SK-N-SH (cell line): ENCODE measurements at regions of chr5 and their contacts with region 1.

Region 1: GRCh38 chr5:141960449-141961202 is 2.6 kb upstream of the PCDH12 start:
- DNase-seq: peak; percentile 87
- H3K4me3 ChIP-seq: peak overlapping the region in 1 of 2 experiments; percentile 43; a peak in 1 of 4 replicates
- H3K27ac ChIP-seq: no peak overlapping the region
- H3K4me1 ChIP-seq: peaks cover 0 to 17% of the 10 kb centered on the region in 2 experiments; a peak in 2 of 4 replicates
- H3K27me3 ChIP-seq: no peaks in the 10 kb centered on the region
- CTCF ChIP-seq: peak; percentile 89
- EP300 ChIP-seq: no peak
- RAD21 ChIP-seq: peak; percentile 90

Region 2: GRCh38 chr5:141650851-141651727 is 309.5 kb before region 1 on chr5 and contains the start of gene FCHSD1:
- CTCF ChIA-PET with region 1: interaction called, 13 read pairs
- POLR2A ChIA-PET with region 1: no interaction called
- DNase-seq: peak; percentile 99
- H3K4me3 ChIP-seq: peak within 1 kb of the TSS; percentile 74 to 83
- H3K27ac ChIP-seq: peak within 1 kb of the TSS in 1 of 2 experiments; percentile 45; a peak in 1 of 4 replicates
- H3K4me1 ChIP-seq: peaks cover 0 to 15% of the 10 kb centered on the region in 2 experiments; a peak in 1 of 4 replicates
- H3K27me3 ChIP-seq: no peaks in the 10 kb centered on the region
- CTCF ChIP-seq: no peak
- EP300 ChIP-seq: no peak
- RAD21 ChIP-seq: no peak
- polyA plus RNA-seq, gene FCHSD1: 49.2 and 58.3 TPM in 2 replicates

Region 3: DNA sequence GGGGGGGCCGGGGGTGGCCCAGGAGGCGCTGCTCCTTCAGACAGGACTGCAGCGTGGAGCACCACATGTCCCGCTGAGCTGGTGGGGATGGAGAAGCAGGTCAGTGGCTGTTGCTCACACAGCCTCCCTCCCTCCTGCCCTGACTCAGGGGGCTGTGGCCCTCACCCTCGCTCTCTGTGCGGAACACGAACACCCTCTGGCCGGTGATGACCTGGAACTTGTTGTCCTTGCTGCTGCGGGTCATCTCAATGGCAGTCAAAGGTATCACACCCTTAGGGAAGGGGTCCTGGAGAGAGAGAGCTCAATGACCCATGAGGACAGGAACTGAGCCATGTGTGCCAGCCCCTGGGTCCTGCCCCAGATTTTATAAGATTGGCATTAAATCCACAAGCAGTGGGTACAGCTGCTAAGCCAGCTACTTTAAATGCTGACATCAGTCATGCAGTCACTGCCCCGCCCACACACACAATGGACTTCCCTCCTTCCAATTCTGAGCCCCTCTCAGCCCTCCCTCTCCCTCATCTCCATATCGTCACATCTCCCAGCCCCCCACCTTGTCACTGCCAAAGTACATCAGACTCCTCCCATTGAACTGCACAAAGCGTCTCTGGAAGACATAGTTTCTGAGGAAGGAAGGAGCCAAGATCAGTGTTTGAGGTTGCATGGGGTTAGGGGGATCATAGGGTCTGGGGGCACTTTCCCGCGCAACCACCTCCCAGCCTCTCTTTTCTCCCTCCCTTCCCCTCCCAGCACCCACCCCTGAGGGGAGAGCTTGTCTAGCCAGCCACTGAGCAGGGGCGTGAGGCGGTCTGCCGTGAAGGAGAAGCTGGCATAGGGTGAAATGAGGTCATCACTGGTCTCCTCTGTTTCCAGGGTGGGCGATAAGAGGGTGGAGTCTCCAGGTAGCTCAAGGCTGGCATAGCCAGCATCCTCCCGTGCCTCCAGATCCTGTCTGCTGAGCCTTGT is 287.5 kb before region 1 on chr5:
- CTCF ChIA-PET with region 1: interaction called, 39 read pairs
- POLR2A ChIA-PET with region 1: interaction called, 3 read pairs
- DNase-seq: no peak
- H3K4me3 ChIP-seq: no peak overlapping the region
- H3K27ac ChIP-seq: no peak overlapping the region
- H3K4me1 ChIP-seq: no peaks in the 10 kb centered on the region
- H3K27me3 ChIP-seq: no peaks in the 10 kb centered on the region
- CTCF ChIP-seq: no peak
- EP300 ChIP-seq: no peak
- RAD21 ChIP-seq: no peak

Region 4: DNA sequence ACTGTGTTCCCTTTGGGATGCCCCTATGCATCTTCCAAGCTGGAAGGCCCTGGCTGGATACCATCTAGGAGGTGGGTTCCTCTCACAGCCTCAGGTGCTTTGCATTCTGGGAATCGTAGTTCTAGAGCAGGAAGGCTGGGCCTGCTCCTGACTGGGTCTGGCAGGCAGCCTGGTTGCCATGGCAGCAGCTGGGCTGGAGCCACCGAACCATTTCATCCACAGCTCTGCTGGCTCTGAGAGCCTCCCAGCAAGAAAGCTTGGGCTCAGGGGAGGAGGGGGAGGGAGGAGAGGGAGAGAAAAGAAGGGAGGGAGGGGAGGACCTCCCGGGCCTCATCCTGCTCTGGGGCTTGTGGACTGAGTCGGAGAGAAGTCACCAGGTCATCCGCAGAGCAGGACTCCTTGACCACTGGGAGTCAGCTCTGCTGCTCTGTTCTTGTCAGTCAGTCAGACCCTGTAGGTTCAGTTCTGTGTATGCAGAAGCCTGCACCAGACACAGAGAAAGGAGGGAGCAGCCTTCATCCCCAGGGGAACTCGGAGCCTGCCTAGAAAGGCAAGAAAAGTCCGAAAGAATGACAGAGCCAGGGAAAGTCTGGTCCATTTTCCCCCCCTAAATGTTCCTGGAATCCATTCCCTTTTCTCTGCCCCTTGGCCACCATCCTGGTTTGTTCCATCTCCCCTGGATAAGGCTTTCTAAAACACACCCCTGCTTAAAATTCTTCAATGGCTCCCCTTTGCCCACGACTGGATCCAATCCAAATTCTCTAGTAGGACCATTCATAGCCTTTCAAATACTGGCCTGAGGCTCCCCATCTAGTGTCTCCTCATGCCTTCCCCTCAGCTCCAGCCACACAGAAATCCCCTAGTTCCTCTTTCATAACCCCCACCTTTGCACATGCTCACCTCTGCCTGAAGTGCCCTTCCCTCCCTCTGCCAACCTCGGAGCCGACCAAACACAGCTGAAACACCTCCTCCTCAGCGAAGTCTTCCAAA is 213.2 kb before region 1 on chr5:
- CTCF ChIA-PET with region 1: interaction called, 11 read pairs
- POLR2A ChIA-PET with region 1: no interaction called
- DNase-seq: peak; percentile 91
- H3K4me3 ChIP-seq: no peak overlapping the region
- H3K27ac ChIP-seq: peak overlapping the region in 1 of 2 experiments; percentile 89; a peak in 2 of 4 replicates
- H3K4me1 ChIP-seq: peaks cover 0 to 38% of the 10 kb centered on the region in 2 experiments; a peak in 2 of 4 replicates
- H3K27me3 ChIP-seq: no peaks in the 10 kb centered on the region; the same call in 1 of the 2 replicates
- CTCF ChIP-seq: no peak
- EP300 ChIP-seq: no peak; a peak in 1 of 4 replicates
- RAD21 ChIP-seq: peak; percentile 14; the same call in 1 of the 2 replicates

Region 5: GRCh38 chr5:141835928-141836670 is 124.5 kb before region 1 on chr5:
- CTCF ChIA-PET with region 1: interaction called, 14 read pairs
- POLR2A ChIA-PET with region 1: no interaction called
- DNase-seq: no peak
- H3K4me3 ChIP-seq: no peak overlapping the region
- H3K27ac ChIP-seq: no peak overlapping the region
- H3K4me1 ChIP-seq: peaks cover 0 to 59% of the 10 kb centered on the region in 2 experiments; a peak in 2 of 4 replicates
- H3K27me3 ChIP-seq: peaks cover 17% of the 10 kb centered on the region; the same call in 1 of the 2 replicates
- CTCF ChIP-seq: no peak
- EP300 ChIP-seq: no peak
- RAD21 ChIP-seq: no peak

Region 6: DNA sequence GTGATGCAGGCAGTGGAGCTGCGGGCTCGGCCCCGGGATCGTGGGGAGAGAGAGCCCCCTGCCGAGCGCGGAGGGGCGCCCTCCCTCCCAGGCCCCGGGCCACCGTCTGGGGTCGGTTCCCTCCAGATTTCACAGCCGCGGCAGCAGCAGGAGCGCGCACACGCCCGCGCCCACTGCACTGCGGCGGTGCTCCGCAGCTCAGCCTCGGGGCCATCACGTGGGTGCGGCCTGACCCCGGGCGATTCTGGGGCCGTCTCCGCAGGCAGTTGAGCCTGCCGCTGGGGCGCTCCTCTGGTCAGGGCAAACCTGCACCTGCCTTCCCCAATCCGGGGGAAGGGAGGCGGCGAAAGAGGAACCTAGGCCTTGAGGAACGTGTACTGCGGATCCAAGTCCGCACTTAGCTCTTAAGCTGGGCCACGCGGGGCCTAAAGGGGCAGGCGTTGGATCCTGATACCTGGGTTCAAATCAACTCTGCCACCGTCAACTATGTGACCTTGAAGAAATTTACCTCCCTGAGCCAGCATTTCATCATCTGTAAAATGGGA is 46.4 kb before region 1 on chr5:
- CTCF ChIA-PET with region 1: interaction called, 71 read pairs
- POLR2A ChIA-PET with region 1: interaction called, 4 read pairs
- DNase-seq: peak; percentile 94
- H3K4me3 ChIP-seq: peak overlapping the region in 1 of 2 experiments; percentile 4; a peak in 1 of 4 replicates
- H3K27ac ChIP-seq: no peak overlapping the region
- H3K4me1 ChIP-seq: peaks cover 0 to 4% of the 10 kb centered on the region in 2 experiments; a peak in 1 of 4 replicates
- H3K27me3 ChIP-seq: no peaks in the 10 kb centered on the region; the same call in 1 of the 2 replicates
- CTCF ChIP-seq: no peak
- EP300 ChIP-seq: no peak
- RAD21 ChIP-seq: peak; percentile 75

Region 7: GRCh38 chr5:141976176-141976575 is 15.6 kb after region 1 on chr5:
- CTCF ChIA-PET with region 1: interaction called, 99 read pairs
- POLR2A ChIA-PET with region 1: no interaction called
- DNase-seq: no peak
- H3K4me3 ChIP-seq: no peak overlapping the region
- H3K27ac ChIP-seq: no peak overlapping the region
- H3K4me1 ChIP-seq: peaks cover 8 to 9% of the 10 kb centered on the region in 2 experiments; a peak in 3 of 4 replicates
- H3K27me3 ChIP-seq: no peaks in the 10 kb centered on the region
- CTCF ChIP-seq: no peak
- EP300 ChIP-seq: no peak
- RAD21 ChIP-seq: no peak

Region 8: DNA sequence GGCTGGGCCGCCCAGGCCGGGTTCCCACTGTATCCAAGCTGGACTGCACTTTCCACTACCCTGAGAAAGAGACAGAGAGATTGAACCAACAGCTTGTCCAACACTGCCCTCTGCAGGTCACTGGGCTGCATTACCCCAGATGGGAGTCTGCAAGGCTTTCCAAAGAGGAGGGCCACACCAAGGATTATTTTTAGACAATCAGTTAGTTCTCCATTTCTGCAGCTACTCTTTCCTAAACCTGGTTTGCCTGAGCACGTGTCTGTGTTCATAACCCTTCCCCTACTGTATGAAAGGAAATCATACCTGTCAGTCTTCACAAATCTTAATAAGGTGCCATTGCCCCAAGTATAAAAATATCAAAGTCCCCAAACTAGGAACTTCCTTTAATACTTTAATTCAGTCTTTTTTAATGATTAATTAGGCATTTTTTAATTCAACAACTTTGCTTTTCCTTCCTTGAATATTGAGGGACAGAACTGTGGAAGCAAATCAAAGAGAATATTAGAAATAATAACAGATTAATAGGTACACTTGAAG is 738.6 kb after region 1 on chr5:
- CTCF ChIA-PET with region 1: no interaction called
- POLR2A ChIA-PET with region 1: no interaction called
- DNase-seq: peak; percentile 74
- H3K4me3 ChIP-seq: no peak overlapping the region; a peak in 1 of 4 replicates
- H3K27ac ChIP-seq: no peak overlapping the region
- H3K4me1 ChIP-seq: peaks cover 23 to 28% of the 10 kb centered on the region in 2 experiments
- H3K27me3 ChIP-seq: no peaks in the 10 kb centered on the region
- CTCF ChIP-seq: peak; percentile 95
- EP300 ChIP-seq: no peak
- RAD21 ChIP-seq: peak; percentile 100

Region 9: GRCh38 chr5:142900927-142901326 is 940.3 kb after region 1 on chr5:
- CTCF ChIA-PET with region 1: no interaction called
- POLR2A ChIA-PET with region 1: no interaction called
- DNase-seq: no peak
- H3K4me3 ChIP-seq: no peak overlapping the region
- H3K27ac ChIP-seq: no peak overlapping the region
- H3K4me1 ChIP-seq: peaks cover 3 to 8% of the 10 kb centered on the region in 2 experiments; a peak in 2 of 4 replicates
- H3K27me3 ChIP-seq: no peaks in the 10 kb centered on the region
- CTCF ChIP-seq: no peak
- EP300 ChIP-seq: no peak
- RAD21 ChIP-seq: no peak

Region 10: DNA sequence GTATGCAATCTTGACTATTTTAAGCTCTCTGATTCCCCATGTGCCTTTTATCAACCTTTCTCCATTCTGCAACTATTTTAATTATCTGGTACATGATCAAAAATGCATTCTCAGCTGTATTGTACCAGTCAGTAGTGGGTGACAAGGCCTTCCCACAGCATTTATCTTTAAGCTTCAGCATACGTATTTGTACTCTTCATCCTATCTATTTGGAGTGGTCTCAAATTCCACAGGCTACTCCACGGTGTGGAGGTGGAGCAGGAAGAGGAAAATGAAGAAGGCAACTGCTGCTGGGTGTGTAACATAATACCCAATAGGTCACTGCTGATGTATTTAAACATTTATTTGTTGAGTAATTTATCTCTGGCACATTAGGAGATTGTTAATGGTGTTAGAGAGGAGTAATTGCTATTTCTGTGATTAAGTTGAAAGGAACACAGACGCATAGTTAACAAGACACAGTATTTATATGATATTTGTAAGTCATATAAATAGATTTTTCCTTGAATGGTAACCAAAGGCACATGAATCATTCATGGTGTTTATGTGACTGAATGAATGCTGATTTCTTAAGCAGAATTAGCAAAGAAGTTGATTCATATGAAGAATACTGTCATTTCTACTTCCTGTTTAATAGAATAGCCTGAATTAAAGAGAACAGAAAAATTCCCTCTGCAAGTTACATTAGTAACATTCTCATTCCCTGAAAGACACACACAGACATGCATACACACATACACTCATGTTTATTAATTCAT is 1596.6 kb after region 1 on chr5:
- CTCF ChIA-PET with region 1: no interaction called
- POLR2A ChIA-PET with region 1: no interaction called
- DNase-seq: no peak
- H3K4me3 ChIP-seq: no peak overlapping the region
- H3K27ac ChIP-seq: peak overlapping the region; percentile 39 to 43; a peak in 3 of 4 replicates
- H3K4me1 ChIP-seq: peaks cover 2 to 26% of the 10 kb centered on the region in 2 experiments; a peak in 3 of 4 replicates
- H3K27me3 ChIP-seq: no peaks in the 10 kb centered on the region
- CTCF ChIP-seq: no peak
- EP300 ChIP-seq: no peak
- RAD21 ChIP-seq: no peak